ENCODE measurements at regions of chr9 and their contacts with region 1.

Region 1: DNA sequence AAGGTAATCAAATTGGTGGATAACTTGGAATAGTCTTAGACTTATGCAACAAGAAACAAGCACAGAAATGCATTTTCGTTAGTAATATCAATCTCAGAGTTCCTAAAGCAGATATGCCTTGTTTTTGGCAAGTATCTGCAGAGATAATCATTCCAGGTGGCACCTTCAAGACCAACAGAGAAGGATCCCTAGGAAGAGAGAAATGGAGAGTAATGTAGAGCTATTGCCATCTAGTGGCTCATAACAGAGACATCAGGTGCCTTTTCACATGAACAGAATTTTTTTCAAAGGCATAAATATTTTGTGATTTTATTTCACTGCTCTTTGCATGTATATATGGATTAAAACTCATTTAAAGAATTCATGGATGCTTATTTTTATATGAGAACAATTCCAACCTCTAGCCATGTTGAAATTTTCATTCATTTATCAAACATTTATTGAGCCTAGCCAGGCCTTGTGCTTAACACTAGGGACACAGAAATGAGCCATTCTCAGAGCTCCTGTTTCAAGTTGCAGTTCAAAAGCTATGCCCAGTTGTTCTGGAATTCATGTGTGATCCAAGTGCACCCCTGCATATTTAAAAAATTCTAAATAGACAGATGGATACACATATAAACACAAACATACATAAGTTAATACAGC is 117.5 kb upstream of the OR13F1 start:
- DNase-seq: no peak
- H3K4me3 ChIP-seq: no peak overlapping the region
- H3K27ac ChIP-seq: no peak overlapping the region
- H3K4me1 ChIP-seq: peaks cover 7 to 11% of the 10 kb centered on the region in 2 donors
- H3K27me3 ChIP-seq: no peaks in the 10 kb centered on the region
- CTCF ChIP-seq: peak; percentile 44 to 84 (median 74)
- POLR2A ChIP-seq: no peak

Region 2: DNA sequence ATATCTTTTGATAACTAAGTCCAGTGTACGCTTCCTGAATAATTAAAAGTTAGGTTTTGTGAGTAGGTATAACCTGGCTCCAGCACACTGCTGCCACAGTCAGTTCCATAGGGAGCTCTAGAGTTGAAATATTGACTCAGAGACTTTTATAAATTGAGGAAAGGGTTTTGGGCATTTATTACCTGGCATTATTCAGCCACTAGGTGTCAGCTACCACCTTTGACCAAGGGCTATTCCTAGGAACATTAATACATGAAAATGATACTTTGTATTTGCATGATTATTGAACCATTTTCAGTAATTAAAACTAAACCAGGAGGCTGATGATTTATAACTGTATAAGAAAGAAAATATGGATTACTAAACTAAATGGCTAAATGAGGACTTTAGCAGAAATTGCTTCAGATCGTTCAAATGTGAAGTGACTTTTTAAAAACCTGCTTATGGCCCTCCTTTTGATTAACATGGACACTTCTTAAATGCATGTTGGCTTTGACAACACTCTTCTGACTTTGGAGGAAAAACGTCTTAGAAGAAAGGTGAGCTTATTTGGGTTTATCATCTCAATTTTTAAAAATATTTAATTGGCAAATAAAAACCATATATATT is 209.4 kb before region 1 on chr9:
- intact Hi-C with region 1: loop called (anchors 5 kb)
- DNase-seq: peak in 1 of 2 donors; percentile 6
- H3K4me3 ChIP-seq: no peak overlapping the region
- H3K27ac ChIP-seq: no peak overlapping the region
- H3K4me1 ChIP-seq: no peaks in the 10 kb centered on the region
- H3K27me3 ChIP-seq: no peaks in the 10 kb centered on the region
- CTCF ChIP-seq: peak; percentile 25 to 76 (median 56)
- POLR2A ChIP-seq: no peak

Measured in thyroid gland (tissue), 4 donors.